ENCODE measurements at regions of chr22 and their contacts with region 1.

Region 1: DNA sequence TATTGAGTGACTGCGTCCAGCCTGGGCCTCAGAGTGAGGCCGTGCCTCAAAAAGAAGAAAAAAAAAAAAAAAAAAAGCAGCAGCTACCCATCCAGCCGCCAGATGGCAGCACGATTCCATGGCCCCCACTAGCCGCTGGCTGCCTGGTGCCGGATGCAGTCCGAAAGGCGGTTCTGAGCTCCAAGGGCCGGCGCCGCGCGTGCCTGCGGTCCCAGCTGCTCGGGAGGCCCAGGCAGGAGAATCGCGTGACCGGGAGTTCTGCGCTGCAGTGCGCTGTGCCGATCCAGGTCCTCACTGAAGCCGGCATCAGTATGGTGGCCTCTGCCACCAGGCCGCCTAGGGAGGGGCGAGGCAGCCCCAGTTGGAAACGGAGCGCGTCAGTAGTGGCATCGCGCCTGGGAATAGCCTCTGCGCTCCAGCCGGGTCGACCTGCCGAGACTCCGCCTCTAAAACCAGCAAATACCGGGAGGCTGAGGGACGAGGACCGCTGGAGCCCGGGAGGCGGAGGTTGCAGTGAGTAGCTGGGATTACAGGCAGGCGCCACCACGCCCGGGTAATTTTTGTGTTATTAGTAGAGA is 19.3 kb downstream of the SCARF2 start:
- DNase-seq: peak; percentile 83
- H3K4me3 ChIP-seq: peak overlapping the region; percentile 38 to 49 (median 42)
- H3K27ac ChIP-seq: no peak overlapping the region
- H3K4me1 ChIP-seq: no peaks in the 10 kb centered on the region
- H3K27me3 ChIP-seq: peaks cover 2 to 5% of the 10 kb centered on the region in 2 experiments
- CTCF ChIP-seq: peak; percentile 82 to 92
- POLR2A ChIP-seq: no peak

Region 2: DNA sequence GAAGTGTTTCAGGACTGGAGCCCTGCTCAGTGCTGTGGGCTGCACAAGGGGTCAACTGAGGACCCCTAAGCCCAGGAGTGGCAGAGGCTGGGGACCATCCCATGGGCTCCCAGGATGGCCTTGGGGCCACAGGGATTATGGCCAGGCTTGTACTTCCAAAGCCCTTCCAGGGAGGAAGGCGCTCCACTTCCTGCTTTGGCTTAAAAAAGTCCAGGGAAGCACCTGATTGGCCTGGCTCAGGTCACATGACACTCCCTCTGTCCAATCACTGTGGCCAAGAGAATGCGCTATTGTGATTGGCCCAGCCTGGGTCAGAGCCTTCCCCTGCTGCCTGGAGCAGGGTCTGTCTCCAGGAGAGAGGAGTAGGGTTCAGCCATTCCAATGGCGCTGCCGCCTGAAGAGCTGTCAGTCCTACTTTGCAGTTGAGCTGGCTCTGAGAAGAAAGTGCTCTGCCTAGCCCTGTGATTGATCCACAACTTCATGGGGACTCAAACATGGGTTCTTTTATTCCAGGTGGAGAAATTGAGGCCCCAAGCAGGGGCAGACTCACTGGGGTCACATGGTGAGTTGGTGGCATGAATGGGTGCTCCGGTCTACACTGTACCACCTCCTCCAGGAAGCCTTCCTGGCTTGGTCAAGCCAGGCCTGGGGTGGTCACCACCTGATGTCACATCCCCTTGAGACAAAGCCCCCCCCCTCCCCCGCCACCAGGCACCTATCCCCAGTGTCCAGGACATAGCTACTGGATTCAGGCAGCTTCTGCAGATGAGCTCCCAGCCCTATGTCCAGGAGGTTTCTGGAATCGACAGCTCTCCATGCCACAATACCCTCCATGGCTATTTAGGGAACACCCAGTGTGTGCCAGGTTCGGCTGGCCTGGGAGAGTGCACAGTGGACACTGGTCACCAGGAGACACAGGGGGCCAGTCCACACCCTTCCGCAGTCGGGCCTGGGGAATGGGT is 198.4 kb before region 1 on chr22:
- CTCF ChIA-PET with region 1: no interaction called
- POLR2A ChIA-PET with region 1: no interaction called
- dilution Hi-C with region 1: no loop called
- intact Hi-C with region 1: no loop called
- DNase-seq: no peak
- H3K4me3 ChIP-seq: no peak overlapping the region
- H3K27ac ChIP-seq: no peak overlapping the region
- H3K4me1 ChIP-seq: no peaks in the 10 kb centered on the region
- H3K27me3 ChIP-seq: no peaks in the 10 kb centered on the region
- CTCF ChIP-seq: no peak
- POLR2A ChIP-seq: no peak

Region 3: DNA sequence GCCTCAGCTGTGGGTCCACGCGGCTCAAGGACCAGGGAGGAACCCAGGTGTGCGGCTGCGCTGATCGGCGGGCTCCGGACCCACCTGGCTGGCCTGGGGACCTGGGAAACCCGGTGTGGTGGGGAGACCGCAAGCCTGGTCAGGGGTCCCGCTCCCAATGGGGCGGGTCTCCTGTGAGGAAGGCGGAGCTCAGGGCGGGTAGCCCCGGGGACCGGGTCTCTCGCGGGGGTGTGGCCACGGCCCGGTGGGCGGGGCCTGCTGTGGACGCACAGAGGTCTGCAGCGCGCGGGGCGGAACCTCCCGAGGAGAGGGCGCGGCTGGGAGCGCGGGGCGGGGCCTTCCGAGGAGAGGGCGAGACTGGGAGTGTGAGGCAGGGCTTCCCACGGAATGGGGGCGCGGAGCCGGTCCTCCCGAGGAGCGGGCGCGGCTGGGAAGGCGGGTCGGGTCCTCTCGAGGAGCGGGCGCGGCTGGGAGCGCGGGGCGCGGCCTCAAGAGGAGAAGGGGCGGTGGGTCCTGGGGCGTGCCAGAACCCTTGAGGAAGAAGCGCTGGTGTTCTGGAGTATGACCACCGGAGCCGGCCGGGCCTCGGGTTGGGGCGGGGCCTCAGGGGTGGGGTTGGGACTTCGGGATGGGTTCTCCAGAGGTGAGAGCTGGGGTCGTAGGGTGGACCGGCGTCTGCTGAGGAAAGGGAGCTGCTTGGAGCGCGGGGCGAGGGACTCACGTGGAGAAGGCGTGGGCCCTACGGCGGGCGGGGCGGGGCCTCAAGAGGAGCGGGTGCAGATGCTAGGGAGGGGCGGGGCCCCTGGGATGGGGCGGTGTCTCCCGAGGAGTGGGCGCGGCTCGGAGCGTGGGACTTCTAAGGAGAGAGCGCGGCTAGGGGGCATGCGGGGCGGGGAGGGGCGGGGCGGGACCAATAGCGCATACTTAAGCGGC is 119.2 kb before region 1 on chr22:
- CTCF ChIA-PET with region 1: no interaction called
- POLR2A ChIA-PET with region 1: no interaction called
- dilution Hi-C with region 1: no loop called
- intact Hi-C with region 1: no loop called
- DNase-seq: peak; percentile 68
- H3K4me3 ChIP-seq: peak overlapping the region; percentile 31 to 62 (median 59)
- H3K27ac ChIP-seq: no peak overlapping the region
- H3K4me1 ChIP-seq: peaks cover 8% of the 10 kb centered on the region
- H3K27me3 ChIP-seq: peaks cover 0 to 4% of the 10 kb centered on the region in 2 experiments
- CTCF ChIP-seq: no peak
- POLR2A ChIP-seq: no peak

Region 4: DNA sequence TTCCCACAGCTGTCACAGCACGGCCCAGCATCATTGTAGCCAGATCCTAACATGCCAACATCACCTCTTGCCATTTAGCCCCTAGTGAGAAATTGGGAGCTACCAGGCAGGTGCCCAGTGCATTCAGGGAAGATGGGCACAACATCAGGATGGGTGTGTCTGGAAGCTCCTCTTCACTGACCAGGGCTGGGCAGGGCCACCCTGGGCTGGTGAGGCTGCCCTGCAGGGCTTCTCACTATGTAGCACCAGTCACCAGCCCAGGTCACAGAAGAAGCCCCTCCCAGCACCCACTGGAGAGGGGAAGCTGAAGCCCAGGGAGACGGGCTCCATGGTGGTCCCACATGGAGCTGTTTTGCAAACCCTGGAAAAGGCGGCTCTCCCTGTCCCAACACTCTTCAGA is 10.5 kb before region 1 on chr22:
- CTCF ChIA-PET with region 1: interaction called, 32 read pairs
- POLR2A ChIA-PET with region 1: no interaction called
- dilution Hi-C with region 1: no loop called
- intact Hi-C with region 1: no loop called
- DNase-seq: no peak
- H3K4me3 ChIP-seq: no peak overlapping the region
- H3K27ac ChIP-seq: no peak overlapping the region
- H3K4me1 ChIP-seq: no peaks in the 10 kb centered on the region
- H3K27me3 ChIP-seq: peaks cover 0 to 3% of the 10 kb centered on the region in 2 experiments
- CTCF ChIP-seq: no peak
- POLR2A ChIP-seq: no peak

Region 5: GRCh38 chr22:20437613-20438426 is 19.5 kb after region 1 on chr22 and contains the start of gene SCARF2:
- CTCF ChIA-PET with region 1: interaction called, 36 read pairs
- POLR2A ChIA-PET with region 1: interaction called, 10 read pairs
- dilution Hi-C with region 1: no loop called
- intact Hi-C with region 1: no loop called
- DNase-seq: peak; percentile 52
- H3K4me3 ChIP-seq: peak within 1 kb of the TSS; percentile 43 to 75 (median 59)
- H3K27ac ChIP-seq: peak within 1 kb of the TSS; percentile 4
- H3K4me1 ChIP-seq: peaks cover 11% of the 10 kb centered on the region
- H3K27me3 ChIP-seq: no peaks in the 10 kb centered on the region
- CTCF ChIP-seq: no peak
- POLR2A ChIP-seq: no peak
- total RNA-seq, gene SCARF2: 18.4 and 20.1 TPM in 2 replicates

Region 6: DNA sequence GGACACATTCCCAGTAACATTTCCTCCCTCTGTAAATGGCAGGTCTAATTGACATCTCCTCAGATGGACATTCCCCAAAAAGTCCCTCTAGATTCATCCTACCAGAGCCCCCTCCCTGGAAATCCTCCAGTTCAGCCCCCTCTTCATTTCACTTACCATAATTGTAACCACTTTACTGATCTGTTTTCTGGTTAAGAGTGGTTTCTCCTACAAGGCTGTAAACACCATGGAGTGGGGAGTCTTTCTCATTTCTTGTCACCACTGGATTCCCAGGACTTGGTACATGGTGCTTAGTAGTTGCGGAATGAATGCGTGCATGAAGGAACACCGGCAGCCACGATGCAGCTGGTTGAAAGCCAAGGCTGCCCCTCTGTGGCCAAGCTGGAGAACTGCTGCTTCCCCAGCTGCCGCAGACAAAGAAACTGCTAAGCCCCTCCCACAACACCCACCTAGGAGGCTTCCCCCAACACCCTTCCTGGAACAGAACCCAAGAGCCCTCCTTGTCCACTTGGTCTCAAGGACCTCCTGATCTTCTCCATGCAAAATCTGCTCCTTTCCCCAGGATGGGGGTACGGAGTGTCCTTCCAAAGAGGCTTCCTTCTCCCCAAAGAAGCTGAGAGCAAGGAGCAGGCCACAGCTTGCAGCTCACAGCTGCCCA is 37.9 kb after region 1 on chr22:
- CTCF ChIA-PET with region 1: interaction called, 337 read pairs
- POLR2A ChIA-PET with region 1: interaction called, 13 read pairs
- dilution Hi-C with region 1: no loop called
- intact Hi-C with region 1: loop called (anchors 1 kb)
- DNase-seq: peak; percentile 86
- H3K4me3 ChIP-seq: no peak overlapping the region
- H3K27ac ChIP-seq: no peak overlapping the region
- H3K4me1 ChIP-seq: no peaks in the 10 kb centered on the region
- H3K27me3 ChIP-seq: no peaks in the 10 kb centered on the region
- CTCF ChIP-seq: peak; percentile 88 to 96
- POLR2A ChIP-seq: no peak

Region 7: DNA sequence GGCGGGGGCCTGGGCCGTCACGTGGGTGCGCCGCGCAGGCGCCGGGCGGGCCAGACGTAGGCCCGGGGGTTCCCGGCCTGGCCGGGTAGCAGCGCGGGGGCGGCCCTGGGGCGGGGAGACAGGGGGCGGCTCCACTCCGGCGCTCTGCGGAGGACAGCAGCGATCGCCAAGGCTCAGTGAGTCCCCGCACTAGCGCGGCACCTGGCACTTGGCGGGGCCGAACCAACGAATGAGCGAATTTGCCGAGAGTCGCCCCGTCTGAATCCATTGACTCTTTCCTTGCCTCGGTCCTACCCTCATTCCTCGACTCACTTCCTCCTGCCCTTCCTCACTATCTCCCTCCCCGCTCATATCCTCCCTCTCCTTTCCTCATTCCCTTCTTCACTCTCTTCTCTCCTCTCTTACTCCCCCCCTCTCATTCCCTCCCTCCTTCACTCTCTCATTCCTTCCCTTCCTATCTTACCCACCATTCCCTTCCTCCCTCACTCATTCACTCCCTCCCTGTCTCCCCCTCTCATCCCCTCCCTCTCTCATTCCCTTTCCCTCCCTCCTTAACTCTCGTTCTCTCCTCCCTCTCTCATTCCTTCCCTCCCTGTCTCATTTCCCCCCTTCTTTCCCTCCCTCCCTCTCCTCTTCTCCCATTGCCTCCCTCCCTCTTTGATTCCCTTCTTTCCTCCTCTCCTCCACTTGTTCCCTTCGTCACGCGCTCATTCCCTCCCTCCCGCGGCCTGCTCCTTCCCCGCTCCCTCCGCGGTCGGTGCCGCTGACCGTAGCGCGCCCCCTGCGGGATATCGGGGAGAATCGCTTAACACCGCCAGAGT is 77.8 kb after region 1 on chr22:
- CTCF ChIA-PET with region 1: interaction called, 19 read pairs
- POLR2A ChIA-PET with region 1: no interaction called
- dilution Hi-C with region 1: no loop called
- intact Hi-C with region 1: loop called (anchors 1 kb)
- DNase-seq: peak; percentile 91
- H3K4me3 ChIP-seq: peak overlapping the region; percentile 62 to 77 (median 74)
- H3K27ac ChIP-seq: peak overlapping the region; percentile 85
- H3K4me1 ChIP-seq: peaks cover 12% of the 10 kb centered on the region
- H3K27me3 ChIP-seq: no peaks in the 10 kb centered on the region
- CTCF ChIP-seq: peak; percentile 87 to 91
- POLR2A ChIP-seq: peak; percentile 93

Region 8: DNA sequence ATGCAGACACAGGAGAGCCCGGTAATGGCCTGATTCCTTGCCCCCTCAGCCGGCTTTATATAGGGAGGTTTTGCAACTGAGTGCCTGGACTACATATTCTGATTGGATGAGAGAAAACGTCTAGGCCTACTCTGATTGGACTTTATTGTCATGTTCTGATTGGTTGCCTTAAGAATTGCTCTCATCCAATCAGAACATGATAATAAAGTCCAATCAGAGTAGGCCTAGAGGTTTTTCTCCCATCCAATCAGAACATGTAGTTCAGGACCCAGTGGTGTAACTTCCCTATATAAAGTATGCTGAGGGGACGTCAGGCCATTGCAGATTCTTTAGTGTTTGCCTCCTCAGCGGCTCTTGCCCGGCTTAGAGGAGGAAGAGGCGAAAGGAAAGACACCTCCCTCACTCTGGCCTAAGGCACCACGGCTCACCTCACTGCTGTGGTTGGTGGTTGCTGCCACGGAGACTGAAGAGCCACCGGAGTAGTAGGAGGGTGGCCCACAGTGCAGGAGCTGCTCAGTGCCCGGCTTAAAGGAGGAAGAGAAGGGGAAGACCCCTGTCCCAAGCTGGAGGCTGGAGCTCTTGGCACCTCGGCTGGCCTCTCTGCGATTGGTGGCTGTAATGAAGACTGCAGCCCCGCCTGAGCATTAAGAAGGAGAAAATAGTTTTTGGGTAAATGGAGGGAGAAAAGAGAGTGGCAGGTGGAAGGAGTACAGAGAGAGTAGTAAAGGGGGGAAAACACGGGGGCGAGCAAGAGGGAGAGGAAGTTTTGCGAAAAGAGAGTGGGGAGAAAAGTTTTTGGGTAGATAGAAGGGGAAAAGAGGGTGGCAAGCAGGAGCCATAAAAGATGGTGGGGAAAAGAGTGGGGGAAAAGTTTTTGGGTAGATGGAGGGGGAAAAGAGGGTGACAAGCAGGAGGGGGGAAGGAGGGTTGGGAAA is 238.9 kb after region 1 on chr22:
- CTCF ChIA-PET with region 1: no interaction called
- POLR2A ChIA-PET with region 1: no interaction called
- dilution Hi-C with region 1: no loop called
- intact Hi-C with region 1: no loop called
- DNase-seq: no peak
- H3K4me3 ChIP-seq: no peak overlapping the region
- H3K27ac ChIP-seq: no peak overlapping the region
- H3K4me1 ChIP-seq: no peaks in the 10 kb centered on the region
- H3K27me3 ChIP-seq: peaks cover 3 to 28% of the 10 kb centered on the region in 2 experiments
- CTCF ChIP-seq: no peak
- POLR2A ChIP-seq: no peak